Breast epithelium (tissue), 4 donors: ENCODE measurements at regions of chr12 and their contacts with region 1.

Region 1: GRCh38 chr12:131092901-131093603 is 139.3 kb downstream of the ADGRD1 start:
- DNase-seq: peak in 1 of 2 donors; percentile 35
- H3K4me3 ChIP-seq: no peak overlapping the region
- H3K27ac ChIP-seq: no peak overlapping the region
- H3K4me1 ChIP-seq: no peaks in the 10 kb centered on the region
- H3K27me3 ChIP-seq: peaks cover 0 to 3% of the 10 kb centered on the region in 2 donors
- CTCF ChIP-seq: no peak
- POLR2A ChIP-seq: no peak

Region 2: GRCh38 chr12:131137836-131138637 is 45.0 kb after region 1 on chr12:
- intact Hi-C with region 1: loop called (anchors 1 kb)
- DNase-seq: no peak
- H3K4me3 ChIP-seq: peak overlapping the region in 1 of 3 donors; percentile 40
- H3K27ac ChIP-seq: peak overlapping the region in 1 of 2 donors; percentile 32
- H3K4me1 ChIP-seq: no peaks in the 10 kb centered on the region
- H3K27me3 ChIP-seq: peaks cover 0 to 8% of the 10 kb centered on the region in 2 donors
- CTCF ChIP-seq: no peak
- POLR2A ChIP-seq: no peak